AG04449 (cell line): ENCODE measurements at regions of chr19 and their contacts with region 1.

Region 1: GRCh38 chr19:17496337-17496997 is 15.0 kb upstream of the PGLS start:
- DNase-seq: no peak
- H3K4me3 ChIP-seq: no peak overlapping the region
- CTCF ChIP-seq: peak; percentile 91

Region 2: GRCh38 chr19:17450264-17451075 is 46.0 kb before region 1 on chr19:
- CTCF ChIA-PET with region 1: no interaction called
- POLR2A ChIA-PET with region 1: no interaction called
- DNase-seq: no peak
- H3K4me3 ChIP-seq: no peak overlapping the region
- CTCF ChIP-seq: no peak

Region 3: GRCh38 chr19:17475541-17476115 is 20.8 kb before region 1 on chr19:
- CTCF ChIA-PET with region 1: interaction called, 25 read pairs
- POLR2A ChIA-PET with region 1: interaction called, 3 read pairs
- DNase-seq: no peak
- H3K4me3 ChIP-seq: no peak overlapping the region
- CTCF ChIP-seq: no peak

Region 4: DNA sequence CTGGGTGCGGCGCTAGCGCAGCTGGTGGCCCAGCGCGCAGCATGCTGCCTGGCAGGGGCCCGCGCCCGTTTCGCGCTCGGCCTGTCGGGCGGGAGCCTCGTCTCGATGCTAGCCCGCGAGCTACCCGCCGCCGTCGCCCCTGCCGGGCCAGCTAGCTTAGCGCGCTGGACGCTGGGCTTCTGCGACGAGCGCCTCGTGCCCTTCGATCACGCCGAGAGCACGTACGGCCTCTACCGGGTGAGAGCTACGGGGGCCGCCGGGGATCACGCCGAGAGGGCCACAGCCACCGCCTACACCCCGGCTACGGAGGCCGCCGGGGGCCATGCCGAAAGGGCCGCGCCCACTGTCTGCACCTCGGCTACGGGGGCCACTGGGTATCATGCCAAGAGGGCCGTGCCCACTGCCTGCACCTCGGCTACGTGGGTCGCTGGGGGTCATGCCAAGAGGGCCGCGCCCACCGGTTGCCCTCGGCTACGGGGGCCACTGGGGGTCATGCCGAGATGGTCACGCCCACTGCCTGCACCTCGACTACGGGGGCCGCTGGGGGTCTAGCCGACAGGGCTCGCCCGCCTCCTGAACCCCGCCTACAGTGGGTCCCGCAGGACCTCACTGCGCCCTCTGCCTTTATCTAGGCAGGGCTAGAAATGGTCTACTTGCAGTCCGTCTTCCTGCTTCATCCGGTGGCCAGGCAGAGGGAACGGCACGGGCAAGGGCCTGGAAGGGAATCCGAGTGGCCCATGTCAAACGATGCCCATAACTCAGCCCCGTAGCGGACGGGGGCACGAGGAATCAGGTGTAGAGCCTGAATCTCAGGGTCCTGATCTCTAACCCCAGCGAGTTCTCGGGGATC is 15.5 kb after region 1 on chr19:
- CTCF ChIA-PET with region 1: interaction called, 28 read pairs
- POLR2A ChIA-PET with region 1: no interaction called
- DNase-seq: no peak
- H3K4me3 ChIP-seq: peak overlapping the region; percentile 85
- CTCF ChIP-seq: no peak

Region 5: GRCh38 chr19:17536957-17537356 is 40.5 kb after region 1 on chr19:
- CTCF ChIA-PET with region 1: no interaction called
- POLR2A ChIA-PET with region 1: no interaction called
- DNase-seq: no peak
- H3K4me3 ChIP-seq: no peak overlapping the region
- CTCF ChIP-seq: no peak

Region 6: DNA sequence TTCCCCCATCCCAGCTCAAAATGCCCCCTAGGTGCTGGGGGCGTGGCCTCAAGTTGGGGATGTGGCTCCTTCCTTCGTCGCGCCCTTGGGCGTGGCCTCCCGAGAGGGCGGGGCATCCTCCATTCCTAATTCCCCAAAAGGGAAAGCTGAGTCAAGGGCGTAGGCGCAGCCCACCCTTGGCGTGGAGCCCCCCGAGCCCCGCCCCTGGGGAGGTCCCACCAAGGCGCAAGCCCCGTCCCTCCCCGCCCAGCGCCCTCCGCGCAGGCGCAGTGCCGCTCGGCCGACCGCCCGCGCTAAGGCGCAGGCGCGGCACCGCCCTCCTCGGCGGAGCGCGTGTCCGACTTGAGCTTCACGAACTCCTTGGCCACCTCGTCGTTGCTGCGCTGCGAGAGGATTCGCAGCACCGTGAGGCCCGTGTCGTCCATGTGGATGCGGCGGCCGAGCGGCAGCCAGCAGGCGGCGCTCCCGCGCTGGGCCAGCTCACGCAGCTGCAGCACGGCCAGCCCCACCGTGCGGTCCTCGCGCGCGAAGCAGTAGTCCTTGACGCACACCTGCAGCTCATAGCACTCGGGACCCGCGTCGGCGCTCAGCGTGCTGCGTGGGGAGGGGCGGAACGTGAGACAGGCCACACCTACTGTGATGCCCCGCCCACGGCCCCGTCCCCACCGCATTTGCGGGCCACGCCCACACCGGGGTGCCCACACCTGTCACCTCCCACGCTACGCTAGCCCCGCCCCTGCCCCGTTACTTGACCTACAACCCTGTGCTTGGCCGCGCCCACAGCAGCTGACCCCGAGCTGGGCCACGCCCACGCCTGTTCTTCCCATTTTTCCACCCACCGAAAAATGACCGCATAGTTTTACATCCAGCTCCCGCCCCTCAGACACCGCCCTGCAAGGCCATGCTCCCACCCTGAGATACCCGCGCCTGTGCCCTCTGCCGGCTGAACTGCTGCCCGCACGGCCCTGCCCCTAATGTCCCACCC is 109.6 kb after region 1 on chr19:
- CTCF ChIA-PET with region 1: no interaction called
- POLR2A ChIA-PET with region 1: no interaction called
- DNase-seq: no peak
- H3K4me3 ChIP-seq: peak overlapping the region; percentile 52
- CTCF ChIP-seq: peak; percentile 55

Region 7: DNA sequence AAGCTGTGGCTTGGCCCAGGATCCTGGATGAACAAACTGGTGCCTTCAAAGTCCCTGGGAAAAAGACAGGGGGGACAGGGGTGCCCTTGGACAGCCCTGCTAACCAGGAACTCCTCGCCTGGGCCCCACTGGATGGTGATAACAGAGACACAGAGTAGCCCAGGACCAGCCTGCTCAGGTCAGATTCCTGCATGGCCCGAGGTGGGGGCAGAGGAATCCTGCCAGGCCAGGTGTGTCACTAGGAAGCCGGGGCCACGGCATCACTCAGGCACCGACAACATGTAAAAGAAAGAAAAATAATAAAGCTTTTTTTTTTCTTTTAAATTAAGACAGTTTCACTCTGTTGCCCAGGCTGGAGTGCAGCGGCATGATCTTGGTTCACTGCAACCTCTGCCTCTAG is 357.6 kb after region 1 on chr19:
- CTCF ChIA-PET with region 1: interaction called, 10 read pairs
- POLR2A ChIA-PET with region 1: no interaction called
- DNase-seq: no peak
- H3K4me3 ChIP-seq: no peak overlapping the region
- CTCF ChIP-seq: no peak